GM10248 (cell line): ENCODE measurements at regions of chr11 and their contacts with region 1.

Region 1: GRCh38 chr11:61477727-61478148 is 30.8 kb upstream of the LRRC10B start:
- DNase-seq: peak; percentile 82
- CTCF ChIP-seq: peak; percentile 89

Region 2: GRCh38 chr11:61453695-61454094 is 24.0 kb before region 1 on chr11:
- CTCF ChIA-PET with region 1: interaction called, 14 read pairs
- POLR2A ChIA-PET with region 1: no interaction called
- DNase-seq: no peak
- CTCF ChIP-seq: no peak

Region 3: GRCh38 chr11:61526956-61527731 is 49.4 kb after region 1 on chr11:
- CTCF ChIA-PET with region 1: interaction called, 11 read pairs
- POLR2A ChIA-PET with region 1: no interaction called
- DNase-seq: no peak
- CTCF ChIP-seq: no peak

Region 4: DNA sequence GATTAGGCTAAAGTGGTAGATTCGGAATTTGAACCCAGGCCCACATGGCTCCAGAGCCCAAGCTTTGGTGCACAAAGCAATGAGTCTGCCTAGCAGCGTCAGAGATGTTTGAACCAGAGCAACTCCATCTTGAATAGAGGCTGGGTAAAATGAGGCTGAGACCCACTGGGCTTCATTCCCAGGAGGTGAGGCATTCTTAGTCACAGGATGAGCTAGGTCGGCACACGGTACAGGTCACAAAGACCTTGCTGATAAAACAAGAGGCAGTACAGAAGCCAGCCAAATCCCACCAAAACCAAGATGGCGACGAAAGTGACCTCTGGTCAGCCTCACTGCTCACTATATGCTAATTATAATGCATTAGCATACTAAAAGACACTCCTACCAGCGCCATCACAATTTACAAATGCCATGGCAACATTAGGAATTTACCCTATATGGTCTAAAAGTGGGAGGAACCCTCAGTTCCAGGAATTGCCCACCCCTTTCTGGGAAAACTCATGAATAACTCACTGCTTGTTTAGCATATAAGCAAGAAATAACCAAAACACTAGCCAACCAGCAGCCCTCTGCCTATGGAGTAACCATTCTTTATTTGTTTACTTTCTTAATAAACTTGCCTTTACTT is 162.2 kb after region 1 on chr11:
- CTCF ChIA-PET with region 1: interaction called, 25 read pairs
- POLR2A ChIA-PET with region 1: no interaction called
- DNase-seq: no peak
- CTCF ChIP-seq: no peak